ENCODE measurements at regions of chr17 and their contacts with region 1.

Region 1: DNA sequence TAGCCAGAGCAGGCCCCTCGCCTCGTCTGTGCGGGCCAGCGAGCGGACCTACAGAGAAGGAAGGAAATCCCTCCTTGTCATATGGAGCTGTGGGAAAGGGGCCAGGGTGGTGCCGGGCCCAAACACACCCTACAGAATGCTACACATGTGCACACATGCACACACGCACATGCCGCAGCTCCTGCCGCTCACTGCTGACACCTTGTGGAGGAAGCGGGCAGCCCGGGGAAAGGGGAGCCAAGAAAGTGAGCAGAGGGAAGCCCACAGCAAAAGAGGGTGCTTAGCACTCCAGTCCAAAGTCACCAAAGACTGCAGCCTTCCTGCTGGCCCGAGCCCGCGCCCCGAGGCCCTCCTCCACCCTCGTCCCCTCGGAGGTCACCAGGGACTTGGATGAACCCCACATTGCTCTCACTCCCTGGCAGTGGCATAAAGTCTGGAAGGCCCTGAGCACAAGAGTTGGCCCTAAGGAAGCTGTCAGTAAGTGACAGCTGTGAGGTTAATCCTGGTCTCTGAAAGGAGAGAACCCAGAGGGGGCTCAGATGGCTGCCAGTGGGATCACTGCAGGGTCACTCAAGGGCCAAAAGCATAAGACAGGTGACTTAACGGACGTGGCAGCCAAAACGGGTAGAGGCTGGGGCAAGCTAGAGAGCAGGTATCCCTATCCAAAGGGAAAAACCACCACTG is 68.2 kb downstream of the MYO18A start:
- DNase-seq: peak; percentile 63
- H3K4me3 ChIP-seq: no peak overlapping the region
- H3K27ac ChIP-seq: no peak overlapping the region
- H3K4me1 ChIP-seq: no peaks in the 10 kb centered on the region
- H3K27me3 ChIP-seq: no peaks in the 10 kb centered on the region
- CTCF ChIP-seq: peak; percentile 80 to 92 (median 90)
- POLR2A ChIP-seq: no peak

Region 2: GRCh38 chr17:28967221-28968140 is 144.5 kb before region 1 on chr17:
- intact Hi-C with region 1: loop called (anchors 2 kb)
- DNase-seq: no peak
- H3K4me3 ChIP-seq: no peak overlapping the region
- H3K27ac ChIP-seq: no peak overlapping the region
- H3K4me1 ChIP-seq: no peaks in the 10 kb centered on the region
- H3K27me3 ChIP-seq: no peaks in the 10 kb centered on the region
- CTCF ChIP-seq: no peak
- POLR2A ChIP-seq: no peak

Region 3: DNA sequence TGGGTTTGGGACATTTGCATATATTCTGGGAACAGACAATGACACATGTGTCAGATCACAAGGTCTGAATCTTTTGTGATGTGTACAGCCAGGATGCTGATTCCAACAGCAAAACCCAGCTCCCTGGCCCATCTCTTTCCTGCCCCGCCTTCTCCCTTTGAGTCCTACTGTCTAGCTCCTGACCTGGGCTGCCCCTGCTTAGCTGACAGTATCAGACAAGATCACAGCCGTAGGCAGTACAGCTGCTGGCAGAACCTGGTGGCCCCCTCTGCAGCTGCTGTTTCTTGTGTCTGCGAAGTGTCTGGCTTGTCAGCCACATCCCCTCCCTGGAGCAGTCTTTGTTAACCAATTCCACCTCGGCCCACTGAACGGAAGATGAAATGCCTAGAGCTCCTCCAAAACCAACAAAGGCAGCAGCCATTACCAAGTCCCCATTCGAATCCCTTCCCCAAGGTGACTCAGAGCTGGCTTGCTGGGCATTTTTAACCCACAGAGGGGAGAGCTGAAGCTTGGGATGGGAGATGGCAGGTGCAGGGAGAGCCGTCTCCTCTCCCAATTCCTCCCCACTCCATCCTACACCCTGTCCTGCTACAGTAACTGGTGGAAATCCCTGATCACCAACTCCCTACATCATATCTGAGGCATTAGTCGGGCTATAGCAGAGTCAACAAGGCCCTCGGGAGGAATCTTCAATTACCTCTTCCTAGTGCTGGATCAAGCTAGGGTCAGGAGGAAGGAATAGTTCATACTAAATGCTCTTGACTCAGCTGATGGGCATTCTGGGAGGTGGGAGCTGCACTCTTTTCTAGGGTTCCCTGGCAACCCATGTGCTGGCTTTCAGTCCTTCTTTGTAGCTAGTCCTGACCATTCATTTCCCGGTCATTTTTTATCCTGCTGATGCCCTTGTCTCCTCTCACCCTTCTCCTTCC is 63.3 kb before region 1 on chr17:
- intact Hi-C with region 1: no loop called
- DNase-seq: no peak
- H3K4me3 ChIP-seq: no peak overlapping the region
- H3K27ac ChIP-seq: no peak overlapping the region
- H3K4me1 ChIP-seq: no peaks in the 10 kb centered on the region
- H3K27me3 ChIP-seq: no peaks in the 10 kb centered on the region
- CTCF ChIP-seq: no peak
- POLR2A ChIP-seq: no peak

Region 4: DNA sequence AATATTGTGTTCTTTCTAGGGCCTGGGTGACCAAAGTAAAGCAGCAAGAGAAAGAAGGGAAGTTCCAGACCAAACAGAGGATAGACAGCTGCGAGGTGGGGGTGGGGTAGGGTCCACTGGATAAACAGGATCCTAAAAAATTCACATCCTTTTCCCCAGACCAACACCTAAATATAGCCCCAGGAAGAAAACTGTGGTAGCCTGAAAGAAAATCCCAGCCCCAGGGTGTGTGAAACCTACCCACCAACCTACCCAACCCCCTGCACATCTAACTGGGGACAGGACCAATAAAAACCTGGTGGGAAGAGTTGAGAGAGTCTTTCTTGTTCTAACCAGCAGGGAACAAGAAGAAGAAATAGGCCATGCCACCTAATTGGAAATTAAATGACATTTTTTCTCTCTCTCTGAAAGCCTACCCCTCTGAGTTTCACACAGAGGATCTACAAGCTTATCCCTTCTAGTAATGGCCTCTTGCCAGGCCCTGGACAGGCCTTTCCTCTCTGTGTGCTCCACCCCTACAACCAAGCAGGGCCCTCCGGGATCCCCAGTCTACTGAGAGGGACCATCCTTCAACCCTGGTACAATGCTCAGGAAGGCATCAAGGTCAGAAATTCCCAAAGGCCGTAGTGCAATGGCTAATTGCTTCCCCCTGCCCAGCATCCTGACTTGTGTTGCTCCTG is 56.3 kb after region 1 on chr17:
- intact Hi-C with region 1: no loop called
- DNase-seq: no peak
- H3K4me3 ChIP-seq: no peak overlapping the region
- H3K27ac ChIP-seq: no peak overlapping the region
- H3K4me1 ChIP-seq: no peaks in the 10 kb centered on the region
- H3K27me3 ChIP-seq: no peaks in the 10 kb centered on the region
- CTCF ChIP-seq: no peak
- POLR2A ChIP-seq: no peak

Measured in prostate gland (tissue), 2 donors.